GM18951 (cell line): ENCODE measurements at regions of chr17 and their contacts with region 1.

Region 1: GRCh38 chr17:30104575-30105339 is 11.9 kb upstream of the NSRP1 start:
- POLR2A ChIP-seq: no peak

Region 2: DNA sequence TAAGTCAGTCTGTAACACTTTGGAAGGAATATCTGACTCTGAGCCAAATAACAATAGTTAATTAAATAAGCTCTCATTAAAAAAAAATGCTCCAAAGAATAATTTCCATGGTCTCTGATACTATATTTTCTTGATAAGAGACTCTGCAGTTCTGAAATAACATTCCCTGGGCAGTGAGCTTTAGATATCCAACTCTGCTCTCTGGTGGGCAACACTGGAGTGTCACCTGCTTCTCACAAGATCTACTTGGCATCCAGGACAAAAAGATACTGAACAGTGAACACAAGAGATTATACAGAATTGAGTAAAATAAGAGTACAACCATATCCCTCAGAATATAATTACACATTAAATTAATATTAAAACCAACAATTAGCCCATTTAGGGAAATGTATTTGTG is 173.3 kb after region 1 on chr17:
- in situ Hi-C with region 1: loop called (anchors 10 kb)
- POLR2A ChIP-seq: no peak

Region 3: DNA sequence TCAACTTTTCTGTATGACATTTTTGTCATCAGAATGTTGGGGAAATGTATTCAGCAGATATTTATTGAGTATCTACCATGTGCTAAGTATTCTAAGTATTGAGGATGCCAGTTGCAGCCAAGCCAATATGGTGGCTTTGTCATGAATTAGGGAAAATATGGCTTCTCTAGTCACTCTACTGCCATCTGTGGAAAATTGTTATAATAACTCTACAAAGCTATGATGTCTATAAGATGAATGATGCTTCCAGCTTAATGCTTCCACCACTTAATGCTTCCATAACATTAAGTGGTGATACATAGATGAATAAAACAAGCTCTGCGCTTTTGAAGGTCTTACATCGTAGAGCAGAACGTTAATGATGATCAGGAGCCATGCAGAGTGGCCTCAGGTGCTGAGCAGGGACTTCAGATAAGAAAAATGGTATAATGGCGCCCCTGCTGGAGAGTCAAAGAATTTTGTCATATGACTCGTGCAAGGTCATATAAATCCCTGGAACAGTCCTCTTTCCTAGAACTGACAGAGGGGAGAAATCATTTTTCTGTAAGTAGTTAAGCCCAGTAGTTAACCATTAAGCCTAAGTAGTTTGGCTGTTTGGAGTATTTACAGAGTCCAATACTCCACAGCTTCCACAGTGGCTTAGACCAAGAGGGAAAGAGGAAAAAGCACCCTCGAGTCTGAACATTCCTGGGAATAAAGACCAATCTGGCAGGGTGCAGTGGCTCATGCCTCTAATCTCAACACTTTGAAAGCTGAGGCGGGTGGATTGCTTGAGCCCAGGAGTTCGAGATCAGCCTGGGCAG is 231.8 kb after region 1 on chr17:
- in situ Hi-C with region 1: loop called (anchors 10 kb)
- POLR2A ChIP-seq: no peak